Mammary epithelial cell (primary cell): ENCODE measurements at regions of chr12 and their contacts with region 1.

Region 1: DNA sequence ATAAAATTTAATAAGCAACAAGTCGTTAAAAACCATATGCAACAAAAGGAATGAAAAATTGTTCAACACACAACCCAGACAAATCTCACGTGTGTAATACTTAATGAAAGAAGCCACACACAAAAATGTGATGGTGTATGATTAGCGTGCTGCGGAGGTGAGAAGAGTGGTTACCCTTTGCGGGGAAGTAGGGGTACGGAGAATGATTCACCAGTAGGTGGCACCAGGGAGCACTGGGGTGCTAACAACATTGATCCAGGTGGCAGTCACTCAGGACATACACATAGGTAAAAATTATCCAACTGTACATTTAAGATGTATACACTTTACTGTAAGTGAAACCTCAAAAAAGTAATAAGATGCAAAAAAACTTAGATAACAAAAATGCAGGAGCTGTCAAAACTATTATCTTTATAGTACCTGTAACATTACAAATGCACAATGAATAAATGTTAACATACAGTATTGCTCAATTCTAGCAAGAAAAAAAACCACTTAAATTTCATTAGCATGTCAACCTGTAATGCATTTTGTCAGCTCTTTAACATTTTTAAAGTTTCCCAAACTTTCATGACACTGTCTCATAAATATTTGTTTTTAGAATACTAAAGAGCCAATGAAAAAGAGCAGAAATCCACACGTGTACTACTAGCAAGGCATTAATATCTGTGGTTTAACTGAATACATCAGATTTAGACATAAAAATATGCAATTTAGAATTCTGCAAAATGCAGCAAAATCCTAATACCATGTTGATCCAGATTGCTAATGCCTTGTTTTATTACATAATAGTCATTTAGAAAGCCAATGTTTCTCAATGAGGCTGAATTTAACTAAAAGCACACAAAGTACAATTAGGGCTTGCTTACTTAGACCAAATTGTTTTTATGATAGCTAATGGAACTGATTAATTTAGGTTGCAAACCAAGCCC is 46.7 kb downstream of the TMCC3 start:
- DNase-seq: no peak
- H3K4me3 ChIP-seq: no peak overlapping the region
- H3K27ac ChIP-seq: no peak overlapping the region
- H3K4me1 ChIP-seq: peaks cover 6% of the 10 kb centered on the region
- H3K27me3 ChIP-seq: no peaks in the 10 kb centered on the region
- CTCF ChIP-seq: peak; percentile 62 to 83

Region 2: GRCh38 chr12:94649349-94650142 is 45.8 kb after region 1 on chr12:
- CTCF ChIA-PET with region 1: no interaction called
- dilution Hi-C with region 1: no loop called
- in situ Hi-C with region 1: no loop called
- intact Hi-C with region 1: loop called (anchors 1 kb)
- DNase-seq: peak; percentile 51
- H3K4me3 ChIP-seq: peak overlapping the region; percentile 73 to 92 (median 82)
- H3K27ac ChIP-seq: peak overlapping the region; percentile 63
- H3K4me1 ChIP-seq: peaks cover 27% of the 10 kb centered on the region
- H3K27me3 ChIP-seq: no peaks in the 10 kb centered on the region
- CTCF ChIP-seq: peak; percentile 19 to 53

Region 3: GRCh38 chr12:94725375-94726168 is 121.9 kb after region 1 on chr12:
- CTCF ChIA-PET with region 1: no interaction called
- dilution Hi-C with region 1: no loop called
- in situ Hi-C with region 1: no loop called
- intact Hi-C with region 1: loop called (anchors 5 kb)
- DNase-seq: peak; percentile 66
- H3K4me3 ChIP-seq: no peak overlapping the region
- H3K27ac ChIP-seq: no peak overlapping the region
- H3K4me1 ChIP-seq: no peaks in the 10 kb centered on the region
- H3K27me3 ChIP-seq: no peaks in the 10 kb centered on the region
- CTCF ChIP-seq: peak; percentile 28 to 61

Region 4: DNA sequence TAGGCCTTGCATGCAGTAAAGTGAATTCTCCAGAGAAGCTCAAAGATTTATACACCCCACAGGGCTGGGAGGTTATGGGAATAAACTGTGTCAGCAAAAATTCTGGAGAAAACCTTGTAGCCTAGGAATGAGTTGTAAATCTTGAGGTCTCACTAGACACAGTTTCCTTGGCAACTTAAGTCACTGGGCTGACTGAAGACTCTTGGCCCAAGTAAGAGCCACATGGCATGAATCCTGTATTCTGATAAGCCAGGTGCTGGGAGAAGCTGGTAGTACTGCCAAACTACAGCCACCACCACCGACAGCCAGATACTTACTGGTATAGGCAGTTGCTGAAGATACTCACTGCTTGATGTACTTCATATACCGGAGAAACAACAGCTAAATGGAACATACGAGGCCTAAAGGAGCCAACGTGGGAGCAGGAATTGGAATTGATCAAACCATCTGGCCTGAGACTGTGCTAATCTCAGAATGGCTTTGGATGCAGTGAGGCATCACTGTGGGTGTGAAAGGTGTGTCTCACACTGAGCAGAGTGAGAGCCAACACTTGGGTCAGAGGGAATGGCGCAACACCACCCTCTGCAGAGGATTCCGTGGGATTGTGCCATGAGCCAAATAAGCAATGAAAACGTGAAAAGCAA is 149.5 kb after region 1 on chr12:
- CTCF ChIA-PET with region 1: no interaction called
- dilution Hi-C with region 1: no loop called
- in situ Hi-C with region 1: no loop called
- intact Hi-C with region 1: loop called (anchors 1 kb)
- DNase-seq: peak; percentile 70
- H3K4me3 ChIP-seq: no peak overlapping the region
- H3K27ac ChIP-seq: no peak overlapping the region
- H3K4me1 ChIP-seq: no peaks in the 10 kb centered on the region
- H3K27me3 ChIP-seq: no peaks in the 10 kb centered on the region
- CTCF ChIP-seq: peak; percentile 7 to 44